PC-3 (cell line): ENCODE measurements at regions of chr3 and their contacts with region 1.

Region 1: GRCh38 chr3:24264748-24265158 is 229.9 kb downstream of the THRB start:
- DNase-seq: peak; percentile 81
- ATAC-seq: peak; percentile 46; the same call in 1 of the 2 replicates
- H3K4me3 ChIP-seq: no peak overlapping the region
- H3K27ac ChIP-seq: no peak overlapping the region
- H3K4me1 ChIP-seq: peaks cover 3% of the 10 kb centered on the region; the same call in 1 of the 2 replicates
- H3K27me3 ChIP-seq: no peaks in the 10 kb centered on the region
- CTCF ChIP-seq: peak; percentile 91

Region 2: GRCh38 chr3:24640330-24640877 is 375.7 kb after region 1 on chr3:
- CTCF ChIA-PET with region 1: no interaction called
- POLR2A ChIA-PET with region 1: no interaction called
- intact Hi-C with region 1: loop called (anchors 2 kb)
- DNase-seq: peak; percentile 74
- ATAC-seq: peak; percentile 94
- H3K4me3 ChIP-seq: no peak overlapping the region
- H3K27ac ChIP-seq: no peak overlapping the region
- H3K4me1 ChIP-seq: peaks cover 16% of the 10 kb centered on the region
- H3K27me3 ChIP-seq: no peaks in the 10 kb centered on the region
- CTCF ChIP-seq: peak; percentile 95